Psoas muscle (tissue), 8 donors: ENCODE measurements at regions of chr1 and their contacts with region 1.

Region 1: DNA sequence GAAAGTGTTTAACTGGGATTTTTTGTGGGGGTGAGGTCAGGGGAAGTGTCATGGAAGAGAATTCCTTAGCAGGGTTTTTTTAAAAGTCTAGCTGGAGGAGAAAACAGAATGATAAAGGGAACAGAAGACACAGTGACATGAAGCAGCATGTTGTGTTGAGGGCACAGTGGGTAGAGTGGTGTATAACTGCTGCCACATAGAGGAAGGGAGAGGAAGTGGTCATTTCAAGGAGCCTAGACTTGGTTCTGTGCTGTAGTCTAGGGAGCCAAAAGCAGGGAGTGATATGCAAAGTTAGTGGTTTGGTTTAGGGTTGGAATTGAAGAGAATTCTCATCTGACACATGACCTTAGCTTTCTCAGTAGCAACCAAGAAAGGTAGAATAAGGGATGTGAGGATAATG is 10.2 kb downstream of the EEIG2 start:
- DNase-seq: no peak
- ATAC-seq: peak in 1 of 4 donors; percentile 52
- H3K4me3 ChIP-seq: no peak overlapping the region
- H3K27ac ChIP-seq: no peak overlapping the region
- H3K4me1 ChIP-seq: no peaks in the 10 kb centered on the region
- H3K27me3 ChIP-seq: no peaks in the 10 kb centered on the region
- CTCF ChIP-seq: peak; percentile 16

Region 2: GRCh38 chr1:108521990-108522393 is 48.1 kb before region 1 on chr1:
- intact Hi-C with region 1: no loop called
- DNase-seq: no peak
- ATAC-seq: no peak
- H3K4me3 ChIP-seq: no peak overlapping the region
- H3K27ac ChIP-seq: no peak overlapping the region
- H3K4me1 ChIP-seq: no peaks in the 10 kb centered on the region
- H3K27me3 ChIP-seq: peaks cover 0 to 4% (median 0%) of the 10 kb centered on the region in 3 donors
- CTCF ChIP-seq: no peak

Region 3: GRCh38 chr1:108663074-108663473 is 92.9 kb after region 1 on chr1:
- intact Hi-C with region 1: no loop called
- DNase-seq: no peak
- ATAC-seq: no peak
- H3K4me3 ChIP-seq: no peak overlapping the region
- H3K27ac ChIP-seq: no peak overlapping the region
- H3K4me1 ChIP-seq: peaks cover 4% of the 10 kb centered on the region
- H3K27me3 ChIP-seq: no peaks in the 10 kb centered on the region
- CTCF ChIP-seq: no peak

Region 4: GRCh38 chr1:109327285-109327684 is 757.2 kb after region 1 on chr1:
- intact Hi-C with region 1: loop called in 1 of 2 experiments (anchors 5 kb)
- DNase-seq: no peak
- ATAC-seq: no peak
- H3K4me3 ChIP-seq: no peak overlapping the region
- H3K27ac ChIP-seq: no peak overlapping the region
- H3K4me1 ChIP-seq: no peaks in the 10 kb centered on the region
- H3K27me3 ChIP-seq: no peaks in the 10 kb centered on the region
- CTCF ChIP-seq: no peak